ENCODE measurements at regions of chr2 and their contacts with region 1.

Region 1: DNA sequence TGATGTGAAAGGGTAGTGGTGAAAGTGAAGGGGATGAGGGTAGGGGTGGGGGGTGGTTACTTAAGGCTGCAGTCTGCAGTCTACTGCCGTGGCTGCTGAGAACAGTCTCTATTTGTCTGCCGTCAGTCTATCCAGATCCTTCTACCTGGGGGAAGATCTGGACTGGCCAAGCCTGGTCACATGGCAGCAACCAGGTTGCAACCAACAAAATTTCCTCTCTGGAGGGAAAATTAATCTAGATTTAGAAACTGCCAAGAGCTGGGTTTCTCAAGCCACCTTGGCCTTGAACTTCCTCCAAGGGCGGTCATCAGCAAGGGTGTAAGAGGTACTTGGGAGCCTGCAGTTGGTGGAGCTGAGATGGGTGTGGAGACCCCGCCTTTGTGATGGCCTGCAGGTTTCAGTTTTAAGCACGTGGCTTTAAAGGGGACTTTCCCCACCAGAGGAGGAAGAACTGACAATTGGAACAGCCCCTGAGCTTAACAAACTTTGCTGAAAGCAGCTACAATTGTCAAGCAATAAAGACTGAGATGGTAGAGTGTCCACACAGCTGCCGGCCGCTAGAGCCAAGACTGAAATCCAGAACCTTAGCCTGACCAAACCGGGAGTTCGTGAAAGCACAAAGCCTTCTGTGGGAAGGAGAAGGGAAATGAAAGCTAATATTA is 31.4 kb upstream of the KCMF1 start:
- DNase-seq: peak; percentile 93
- ATAC-seq: peak; percentile 89
- H3K4me3 Mint-ChIP-seq: peak overlapping the region; percentile 69
- H3K27ac Mint-ChIP-seq: peak overlapping the region; percentile 96
- H3K4me1 Mint-ChIP-seq: peaks cover 65% of the 10 kb centered on the region
- H3K27me3 Mint-ChIP-seq: no peaks in the 10 kb centered on the region

Region 2: DNA sequence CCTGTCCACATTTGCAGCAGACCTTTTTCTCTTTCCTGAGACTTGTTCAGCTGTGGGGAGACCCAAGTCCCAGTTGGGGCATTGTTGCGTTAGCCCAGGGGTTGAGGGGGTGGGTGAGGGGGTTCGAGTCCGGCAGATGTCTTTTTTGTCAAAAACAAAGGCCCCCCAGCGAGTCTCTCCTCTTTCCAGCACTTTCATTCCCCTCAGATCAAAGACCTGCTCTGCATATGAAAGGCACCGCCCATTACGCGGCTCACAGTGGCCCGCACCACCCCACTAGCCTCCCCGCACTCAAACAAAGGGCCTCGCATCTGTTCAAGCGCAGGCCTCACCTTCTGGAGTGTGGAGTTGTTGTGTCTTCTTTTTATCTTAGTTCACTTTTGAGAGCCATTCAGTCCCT is 83.8 kb before region 1 on chr2:
- CTCF ChIA-PET with region 1: no interaction called
- POLR2A ChIA-PET with region 1: no interaction called
- DNase-seq: no peak
- ATAC-seq: peak; percentile 42
- H3K4me3 Mint-ChIP-seq: peak overlapping the region; percentile 51
- H3K27ac Mint-ChIP-seq: peak overlapping the region; percentile 87
- H3K4me1 Mint-ChIP-seq: peaks cover 93% of the 10 kb centered on the region
- H3K27me3 Mint-ChIP-seq: no peaks in the 10 kb centered on the region

Region 3: DNA sequence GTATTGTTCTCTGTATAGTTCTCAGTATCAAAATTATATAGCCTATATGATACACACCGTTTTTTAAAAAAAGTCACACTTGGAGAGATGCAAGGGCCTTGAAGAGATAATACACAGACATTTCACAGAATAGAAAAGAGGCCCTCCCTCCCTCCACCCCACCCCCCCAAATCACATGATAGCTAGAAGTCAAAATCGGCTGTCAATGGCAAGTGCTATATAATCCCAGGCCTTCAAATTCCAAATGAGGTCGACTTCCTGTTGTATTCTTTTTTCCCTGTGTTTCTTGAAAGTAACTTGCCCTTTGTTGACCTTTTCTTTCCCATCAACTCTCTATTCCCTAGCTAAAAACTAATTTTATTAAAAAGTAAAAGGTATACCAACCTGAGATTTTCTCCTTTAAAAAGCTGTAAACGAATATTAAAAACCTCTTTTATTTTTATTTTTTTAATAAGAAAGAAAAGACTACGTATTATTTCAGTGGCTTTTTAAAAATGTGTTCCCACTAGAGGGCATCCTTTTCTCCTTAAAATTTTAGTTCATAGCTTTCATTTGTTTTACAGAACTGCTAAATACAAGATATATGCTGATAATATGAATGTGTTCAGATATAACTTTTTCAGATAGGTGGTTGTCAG is 78.0 kb after region 1 on chr2:
- CTCF ChIA-PET with region 1: interaction called, 14 read pairs
- POLR2A ChIA-PET with region 1: interaction called, 3 read pairs
- DNase-seq: no peak
- ATAC-seq: no peak
- H3K4me3 Mint-ChIP-seq: no peak overlapping the region
- H3K27ac Mint-ChIP-seq: no peak overlapping the region
- H3K4me1 Mint-ChIP-seq: peaks cover 49% of the 10 kb centered on the region
- H3K27me3 Mint-ChIP-seq: no peaks in the 10 kb centered on the region